PC-9 (cell line): ENCODE measurements at regions of chr10 and their contacts with region 1.

Region 1: GRCh38 chr10:62268399-62269114 is at the start of gene RTKN2:
- DNase-seq: peak; percentile 90 to 96
- H3K4me3 ChIP-seq: peak within 1 kb of the TSS; percentile 95
- H3K27ac ChIP-seq: peak within 1 kb of the TSS; percentile 54
- H3K4me1 ChIP-seq: peaks cover 33% of the 10 kb centered on the region
- H3K27me3 ChIP-seq: no peaks in the 10 kb centered on the region
- CTCF ChIP-seq: no peak
- total RNA-seq, gene RTKN2: 16.1 and 18.5 TPM in 2 replicates

Region 2: GRCh38 chr10:61987951-61988379 is 280.6 kb before region 1 on chr10:
- CTCF ChIA-PET with region 1: no interaction called
- POLR2A ChIA-PET with region 1: no interaction called
- intact Hi-C with region 1: no loop called
- DNase-seq: no peak
- H3K4me3 ChIP-seq: no peak overlapping the region
- H3K27ac ChIP-seq: no peak overlapping the region
- H3K4me1 ChIP-seq: peaks cover 6% of the 10 kb centered on the region
- H3K27me3 ChIP-seq: no peaks in the 10 kb centered on the region
- CTCF ChIP-seq: no peak

Region 3: DNA sequence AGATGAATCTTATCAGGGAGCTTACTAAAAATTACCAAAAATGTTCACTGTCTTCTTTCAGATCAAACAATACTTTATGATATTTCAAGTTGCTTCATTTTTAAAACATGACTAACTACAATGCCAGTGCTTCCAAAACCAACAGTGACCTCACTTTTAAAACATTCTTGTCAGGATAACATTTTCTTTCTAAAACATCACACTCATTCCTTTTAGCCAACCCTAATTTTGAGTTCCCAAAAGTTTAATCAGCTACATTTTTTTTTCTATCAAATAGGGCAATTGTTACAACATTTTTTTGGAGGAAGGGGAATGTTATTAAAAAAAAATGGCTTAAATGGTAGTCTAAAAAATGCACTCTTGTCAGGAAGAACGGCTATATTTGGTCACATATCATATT is 37.2 kb before region 1 on chr10:
- CTCF ChIA-PET with region 1: no interaction called
- POLR2A ChIA-PET with region 1: no interaction called
- intact Hi-C with region 1: no loop called
- DNase-seq: peak in 1 of 2 experiments; percentile 69
- H3K4me3 ChIP-seq: no peak overlapping the region
- H3K27ac ChIP-seq: peak overlapping the region; percentile 5
- H3K4me1 ChIP-seq: peaks cover 17% of the 10 kb centered on the region
- H3K27me3 ChIP-seq: no peaks in the 10 kb centered on the region
- CTCF ChIP-seq: no peak

Region 4: DNA sequence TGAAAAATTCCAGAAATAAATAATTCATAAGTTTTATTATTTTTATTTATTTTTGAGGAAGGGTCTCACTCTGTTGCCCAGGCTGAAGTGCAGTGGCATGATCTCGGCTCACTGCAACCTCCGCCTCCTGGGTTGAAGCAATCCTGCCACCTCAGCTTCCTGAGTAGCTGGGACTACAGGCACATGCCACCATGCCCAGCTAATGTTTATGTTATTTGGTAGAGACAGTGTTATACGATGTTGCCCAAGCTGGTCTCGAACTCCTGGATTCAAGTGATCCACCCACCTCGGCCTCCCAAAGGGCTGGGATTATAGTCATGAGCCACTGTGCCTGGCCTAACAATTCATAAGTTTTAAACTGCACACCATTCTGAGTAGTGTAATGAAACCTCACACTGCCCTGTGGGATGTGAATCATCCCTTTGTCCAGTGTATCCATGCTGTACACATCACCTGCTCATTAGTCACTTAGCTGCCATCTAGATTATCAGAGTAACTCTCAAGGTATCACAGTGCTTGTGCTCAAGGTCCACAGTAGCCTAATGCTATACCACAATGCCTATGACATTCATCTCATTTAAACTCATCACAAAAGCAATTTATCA is 17.9 kb before region 1 on chr10:
- CTCF ChIA-PET with region 1: no interaction called
- POLR2A ChIA-PET with region 1: no interaction called
- intact Hi-C with region 1: no loop called
- DNase-seq: peak; percentile 35 to 83
- H3K4me3 ChIP-seq: no peak overlapping the region
- H3K27ac ChIP-seq: peak overlapping the region; percentile 52
- H3K4me1 ChIP-seq: 0 out of 2 replicates have a peak, but pooled peaks cover 8% of the 10 kb centered on the region
- H3K27me3 ChIP-seq: no peaks in the 10 kb centered on the region
- CTCF ChIP-seq: no peak

Region 5: DNA sequence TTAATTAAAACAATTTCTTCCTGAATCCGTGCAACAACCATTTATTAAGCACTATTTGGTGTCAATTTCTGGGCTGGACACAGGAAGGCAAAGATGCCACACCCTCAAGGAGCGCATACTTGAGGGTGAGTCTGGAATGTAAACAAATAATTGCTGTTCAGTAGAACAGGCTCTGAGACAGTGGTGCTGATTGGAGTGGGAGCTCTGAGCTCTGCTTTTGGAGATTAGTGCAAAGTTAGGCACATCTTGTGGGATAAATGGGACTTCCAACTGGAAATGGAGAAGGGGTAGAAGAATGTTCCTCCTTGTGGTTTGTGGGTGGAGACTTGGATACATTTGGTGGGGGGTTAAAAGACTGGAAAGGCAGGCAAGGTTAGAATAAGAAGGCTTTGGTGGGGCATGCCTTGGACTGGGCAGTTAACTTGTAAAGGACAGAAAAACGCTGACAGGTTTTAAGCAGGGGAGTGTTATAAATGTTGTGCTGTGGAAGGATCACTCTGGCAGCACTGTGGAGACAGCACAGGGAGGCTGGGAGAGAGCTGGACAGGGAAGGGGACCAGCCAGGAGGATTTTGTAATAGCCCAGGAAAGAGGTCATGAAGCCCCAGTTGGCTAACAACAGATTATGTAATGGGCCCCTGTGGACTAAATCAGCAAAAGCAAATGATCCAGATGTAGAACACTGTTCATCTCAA is 186.3 kb after region 1 on chr10:
- CTCF ChIA-PET with region 1: no interaction called
- POLR2A ChIA-PET with region 1: no interaction called
- intact Hi-C with region 1: loop called (anchors 1 kb)
- DNase-seq: peak; percentile 67 to 81
- H3K4me3 ChIP-seq: peak overlapping the region; percentile 3; the same call in 1 of the 2 replicates
- H3K27ac ChIP-seq: peak overlapping the region; percentile 54
- H3K4me1 ChIP-seq: peaks cover 23% of the 10 kb centered on the region
- H3K27me3 ChIP-seq: no peaks in the 10 kb centered on the region
- CTCF ChIP-seq: no peak